ENCODE measurements at regions of chr5 and their contacts with region 1.

Region 1: GRCh38 chr5:90409318-90410177 is at the start of gene CETN3:
- DNase-seq: peak; percentile 83 to 95
- ATAC-seq: peak; percentile 89 to 97 (median 91)
- H3K4me3 ChIP-seq: peak within 1 kb of the TSS; percentile 85
- H3K4me3 Mint-ChIP-seq: no peak within 1 kb of the TSS
- H3K27ac ChIP-seq: peak within 1 kb of the TSS; percentile 91
- H3K27ac Mint-ChIP-seq: no peak within 1 kb of the TSS
- H3K4me1 ChIP-seq: peaks cover 7% of the 10 kb centered on the region
- H3K4me1 Mint-ChIP-seq: no peaks in the 10 kb centered on the region
- H3K27me3 ChIP-seq: no peaks in the 10 kb centered on the region
- H3K27me3 Mint-ChIP-seq: peaks cover 0 to 6% of the 10 kb centered on the region in 2 donors
- CTCF ChIP-seq: no peak
- total RNA-seq, gene CETN3: 3.2 to 8.5 (median 4.0) TPM

Region 2: DNA sequence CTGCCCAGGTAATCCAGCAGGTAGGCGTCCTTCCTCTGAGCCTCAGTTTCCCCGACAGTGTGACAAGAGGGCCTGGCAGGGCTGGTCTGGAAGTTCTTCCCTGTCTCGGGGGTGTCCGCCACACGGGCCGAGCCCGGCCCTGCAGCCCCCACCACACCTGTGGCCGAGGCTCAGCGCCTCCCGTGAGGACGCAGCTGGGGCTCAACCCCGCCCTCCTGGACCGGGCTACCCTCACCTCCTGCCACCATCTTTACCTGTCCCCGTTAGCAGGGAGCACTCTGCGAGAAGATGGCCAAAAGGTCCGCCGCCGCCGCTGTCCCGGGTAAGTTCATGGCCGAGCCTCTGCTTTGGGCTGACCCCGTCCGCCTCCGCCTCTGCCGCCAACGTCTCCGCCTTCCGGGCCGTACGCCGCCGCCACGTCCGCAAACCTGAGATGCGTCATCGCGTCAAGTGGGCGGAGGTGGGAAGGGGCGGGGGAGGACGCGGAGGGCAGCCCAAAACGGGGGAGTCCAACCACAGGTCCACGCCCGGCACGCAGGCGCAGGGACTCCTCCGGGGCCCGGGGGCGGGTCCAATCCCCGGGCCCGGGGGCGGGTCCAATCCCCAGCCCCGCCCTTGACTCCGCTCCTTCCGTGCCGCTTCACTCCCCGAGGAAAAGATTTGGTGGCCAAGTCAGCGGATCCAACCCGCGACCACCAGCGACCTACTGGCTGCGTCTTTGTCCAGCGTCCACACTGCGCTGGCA is 119.8 kb after region 1 on chr5 and contains the start of gene LYSMD3:
- intact Hi-C with region 1: loop called (anchors 1 kb)
- DNase-seq: peak; percentile 97 to 98
- ATAC-seq: peak; percentile 88 to 98 (median 91)
- H3K4me3 ChIP-seq: peak within 1 kb of the TSS; percentile 89
- H3K4me3 Mint-ChIP-seq: peak within 1 kb of the TSS; percentile 95
- H3K27ac ChIP-seq: peak within 1 kb of the TSS; percentile 93
- H3K27ac Mint-ChIP-seq: peak within 1 kb of the TSS; percentile 90 to 93
- H3K4me1 ChIP-seq: peaks cover 12% of the 10 kb centered on the region
- H3K4me1 Mint-ChIP-seq: peaks cover 21 to 37% of the 10 kb centered on the region in 2 donors
- H3K27me3 ChIP-seq: peaks cover 10% of the 10 kb centered on the region
- H3K27me3 Mint-ChIP-seq: peaks cover 19 to 35% of the 10 kb centered on the region in 2 donors
- CTCF ChIP-seq: no peak
- total RNA-seq, gene LYSMD3: 15.2 to 27.9 (median 19.5) TPM